CD14-positive monocyte (primary cell): ENCODE measurements at regions of chr4 and their contacts with region 1.

Region 1: DNA sequence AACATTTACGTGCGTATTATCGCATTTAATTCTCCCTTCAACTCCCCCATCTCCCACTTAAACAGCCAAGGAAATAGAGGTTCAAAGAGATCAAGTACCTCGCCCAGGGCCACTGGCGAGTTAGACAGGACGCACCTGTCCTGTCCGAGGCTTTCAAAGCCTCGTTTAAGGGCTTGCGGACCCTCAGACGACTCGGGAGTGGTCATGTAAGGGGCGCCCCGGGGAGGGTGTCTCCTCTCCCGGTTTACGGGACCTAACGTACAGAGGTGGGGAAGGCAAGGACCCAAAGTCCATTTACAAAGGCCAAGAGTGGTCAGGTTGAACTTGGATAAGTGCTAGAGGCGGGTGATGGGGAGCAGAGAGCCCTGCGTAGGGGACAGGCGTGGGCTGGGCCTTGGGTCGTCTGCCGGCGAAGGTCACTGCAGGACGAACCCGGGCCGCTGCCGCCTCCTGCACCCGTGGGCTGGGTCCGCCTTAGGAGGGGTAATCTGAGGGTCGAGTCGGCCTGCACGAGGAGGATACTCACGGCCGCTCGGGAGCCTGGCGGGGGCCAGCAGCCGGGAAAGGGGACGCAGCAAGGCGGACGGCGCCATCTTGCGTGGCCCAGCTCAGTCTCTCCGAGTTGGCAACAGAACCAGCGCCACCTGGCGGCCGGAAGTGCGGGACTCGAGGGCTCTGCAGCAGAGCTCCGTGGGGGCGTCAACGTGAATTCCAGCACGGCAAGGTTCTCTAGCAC is 5.9 kb upstream of the NAA15 start:
- DNase-seq: peak; percentile 90 to 93 (median 92)
- H3K4me3 ChIP-seq: peak overlapping the region; percentile 88 to 95 (median 91)
- H3K4me3 Mint-ChIP-seq: peak overlapping the region; percentile 96 to 98
- H3K27ac ChIP-seq: peak overlapping the region; percentile 63 to 92
- H3K27ac Mint-ChIP-seq: peak overlapping the region; percentile 90 to 98 (median 96)
- H3K4me1 ChIP-seq: peaks cover 19 to 34% of the 10 kb centered on the region in 2 donors
- H3K4me1 Mint-ChIP-seq: peaks cover 26% of the 10 kb centered on the region
- H3K27me3 ChIP-seq: no peaks in the 10 kb centered on the region
- H3K27me3 Mint-ChIP-seq: peaks cover 0 to 1% (median 0%) of the 10 kb centered on the region in 3 donors
- CTCF ChIP-seq: peak; percentile 86

Region 2: GRCh38 chr4:138992676-138993075 is 302.7 kb before region 1 on chr4:
- intact Hi-C with region 1: no loop called
- DNase-seq: no peak
- H3K4me3 ChIP-seq: no peak overlapping the region
- H3K4me3 Mint-ChIP-seq: no peak overlapping the region
- H3K27ac ChIP-seq: no peak overlapping the region
- H3K27ac Mint-ChIP-seq: peak overlapping the region in 2 of 7 donors; percentile 47 to 72
- H3K4me1 ChIP-seq: peaks cover 6 to 10% of the 10 kb centered on the region in 2 donors
- H3K4me1 Mint-ChIP-seq: peaks cover 12% of the 10 kb centered on the region
- H3K27me3 ChIP-seq: no peaks in the 10 kb centered on the region
- H3K27me3 Mint-ChIP-seq: no peaks in the 10 kb centered on the region
- CTCF ChIP-seq: no peak

Region 3: GRCh38 chr4:139028191-139028682 is 267.1 kb before region 1 on chr4:
- intact Hi-C with region 1: loop called in 1 of 2 experiments (anchors 10 kb)
- DNase-seq: no peak
- H3K4me3 ChIP-seq: no peak overlapping the region
- H3K4me3 Mint-ChIP-seq: no peak overlapping the region
- H3K27ac ChIP-seq: peak overlapping the region in 1 of 2 donors; percentile 63
- H3K27ac Mint-ChIP-seq: peak overlapping the region; percentile 38 to 75 (median 51)
- H3K4me1 ChIP-seq: peaks cover 18 to 25% of the 10 kb centered on the region in 2 donors
- H3K4me1 Mint-ChIP-seq: peaks cover 44% of the 10 kb centered on the region
- H3K27me3 ChIP-seq: no peaks in the 10 kb centered on the region
- H3K27me3 Mint-ChIP-seq: no peaks in the 10 kb centered on the region
- CTCF ChIP-seq: no peak

Region 4: DNA sequence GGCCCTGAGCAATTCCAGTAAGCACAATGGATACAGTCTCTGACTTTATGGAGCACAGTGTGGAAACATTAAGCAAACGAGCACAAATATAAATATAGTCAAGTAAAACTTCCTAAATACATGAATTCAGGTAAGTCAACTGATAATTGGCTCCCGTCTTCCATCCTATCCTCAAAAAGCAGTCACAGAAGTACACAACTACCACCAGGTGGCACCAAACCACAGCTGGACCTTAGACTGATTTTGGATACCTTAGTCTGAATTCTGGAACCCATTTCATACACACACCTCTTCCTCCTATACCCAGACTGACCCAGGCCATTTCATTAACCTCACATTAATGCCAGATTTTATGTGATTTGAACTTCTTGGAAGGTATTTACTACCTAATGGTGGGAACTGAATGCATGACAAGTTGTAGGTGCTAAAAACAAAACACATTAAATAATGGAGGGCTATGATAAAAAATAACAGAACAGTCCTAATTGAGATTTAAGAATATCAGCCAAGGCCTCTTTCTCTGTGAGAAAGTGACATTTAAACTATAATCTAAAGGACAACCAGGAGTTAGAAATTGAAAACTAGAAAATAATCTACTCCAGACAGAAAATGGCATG is 195.9 kb before region 1 on chr4:
- intact Hi-C with region 1: loop called in 1 of 2 experiments (anchors 5 kb)
- DNase-seq: peak; percentile 68 to 75 (median 68)
- H3K4me3 ChIP-seq: no peak overlapping the region
- H3K4me3 Mint-ChIP-seq: no peak overlapping the region
- H3K27ac ChIP-seq: no peak overlapping the region
- H3K27ac Mint-ChIP-seq: no peak overlapping the region
- H3K4me1 ChIP-seq: no peaks in the 10 kb centered on the region
- H3K4me1 Mint-ChIP-seq: no peaks in the 10 kb centered on the region
- H3K27me3 ChIP-seq: no peaks in the 10 kb centered on the region
- H3K27me3 Mint-ChIP-seq: no peaks in the 10 kb centered on the region
- CTCF ChIP-seq: peak; percentile 82

Region 5: GRCh38 chr4:139229534-139230039 is 65.8 kb before region 1 on chr4:
- intact Hi-C with region 1: loop called (anchors 10 kb)
- DNase-seq: peak; percentile 21 to 52 (median 51)
- H3K4me3 ChIP-seq: no peak overlapping the region
- H3K4me3 Mint-ChIP-seq: no peak overlapping the region
- H3K27ac ChIP-seq: no peak overlapping the region
- H3K27ac Mint-ChIP-seq: no peak overlapping the region
- H3K4me1 ChIP-seq: peaks cover 2 to 5% of the 10 kb centered on the region in 2 donors
- H3K4me1 Mint-ChIP-seq: peaks cover 13% of the 10 kb centered on the region
- H3K27me3 ChIP-seq: no peaks in the 10 kb centered on the region
- H3K27me3 Mint-ChIP-seq: peaks cover 0 to 2% (median 1%) of the 10 kb centered on the region in 3 donors
- CTCF ChIP-seq: peak; percentile 83

Region 6: DNA sequence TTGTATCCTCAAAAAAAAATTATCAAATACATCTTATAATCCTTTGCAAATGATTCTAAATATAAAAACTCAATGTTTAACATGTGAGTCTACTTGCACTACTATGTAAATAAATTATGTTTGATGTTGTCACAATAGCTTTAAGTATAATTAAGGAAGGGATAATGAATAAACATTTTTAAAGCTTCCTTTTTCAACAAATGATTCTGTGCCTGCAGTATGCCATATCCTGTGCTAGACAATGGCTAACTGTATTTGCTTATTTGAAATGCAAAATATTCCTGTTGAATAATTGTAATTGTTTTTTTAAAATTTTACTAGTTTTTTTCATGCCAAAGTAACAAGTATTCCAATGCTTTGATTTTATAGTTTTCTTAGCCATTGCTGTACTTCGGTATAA is 65.9 kb after region 1 on chr4:
- intact Hi-C with region 1: no loop called
- DNase-seq: no peak
- H3K4me3 ChIP-seq: no peak overlapping the region
- H3K4me3 Mint-ChIP-seq: no peak overlapping the region
- H3K27ac ChIP-seq: no peak overlapping the region
- H3K27ac Mint-ChIP-seq: no peak overlapping the region
- H3K4me1 ChIP-seq: no peaks in the 10 kb centered on the region
- H3K4me1 Mint-ChIP-seq: peaks cover 4% of the 10 kb centered on the region
- H3K27me3 ChIP-seq: no peaks in the 10 kb centered on the region
- H3K27me3 Mint-ChIP-seq: no peaks in the 10 kb centered on the region
- CTCF ChIP-seq: no peak